ENCODE measurements at regions of chr5 and their contacts with region 1.

Region 1: GRCh38 chr5:143395638-143396352 is 7.7 kb downstream of the NR3C1 start:
- DNase-seq: no peak

Region 2: DNA sequence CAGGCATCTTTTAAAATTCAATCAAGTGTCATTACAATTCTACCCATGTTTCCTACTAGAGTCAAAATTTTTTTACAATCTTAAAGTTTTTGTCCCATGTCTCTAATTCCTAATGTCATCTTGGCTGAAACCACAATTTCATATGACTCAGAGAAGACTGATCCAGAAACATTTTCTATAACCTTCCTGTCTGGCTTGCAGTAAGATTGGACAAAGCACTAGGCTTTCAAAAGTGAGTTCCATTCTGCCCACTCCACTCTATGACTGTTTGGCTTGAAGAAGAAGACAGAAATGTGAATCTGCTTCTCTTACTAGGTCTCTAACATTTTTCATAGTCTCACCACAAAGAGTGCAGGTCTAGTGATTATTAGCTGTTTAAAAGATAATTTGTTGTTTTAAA is 81.1 kb before region 1 on chr5:
- intact Hi-C with region 1: loop called (anchors 10 kb)
- DNase-seq: no peak

Region 3: DNA sequence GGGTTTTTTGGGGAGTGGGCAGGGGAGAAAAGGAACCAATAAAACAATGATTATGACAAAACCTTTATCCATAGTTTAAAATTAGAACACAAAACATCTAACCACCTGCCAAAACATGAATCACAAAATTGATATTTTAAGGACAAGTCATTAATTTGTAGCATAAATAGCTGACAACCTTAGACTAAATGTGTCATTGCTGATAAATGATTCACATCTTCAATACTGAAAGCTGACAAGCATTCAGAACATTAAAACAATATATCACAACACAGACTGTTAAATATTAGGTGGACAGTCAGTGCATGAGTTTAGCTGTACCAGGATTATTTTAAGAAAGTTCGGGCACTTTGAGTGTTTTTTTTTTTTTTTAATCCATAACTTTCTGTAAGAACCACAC is 63.8 kb before region 1 on chr5:
- intact Hi-C with region 1: no loop called
- DNase-seq: no peak

Region 4: GRCh38 chr5:143341807-143342570 is 53.8 kb before region 1 on chr5:
- intact Hi-C with region 1: loop called (anchors 10 kb)
- DNase-seq: no peak

Region 5: DNA sequence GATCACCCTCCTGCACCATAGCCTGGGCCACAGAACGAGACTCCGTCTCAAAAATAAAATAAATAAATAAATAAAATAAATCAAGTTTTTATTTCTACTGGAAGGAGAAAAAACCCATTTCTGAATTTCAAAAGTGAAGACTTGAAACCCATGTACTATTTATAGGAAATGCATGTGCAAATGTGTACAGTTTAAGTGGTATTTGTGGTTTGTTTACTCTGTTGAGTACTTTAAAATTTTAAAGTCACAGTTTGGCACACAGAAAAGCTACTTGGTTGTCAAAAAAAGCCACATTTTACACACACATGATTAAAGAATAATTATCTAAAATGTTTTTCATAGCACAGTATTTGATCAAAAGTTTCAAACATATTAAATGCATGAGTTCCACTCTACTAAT is 35.9 kb before region 1 on chr5:
- intact Hi-C with region 1: loop called (anchors 5 kb)
- DNase-seq: no peak

Measured in cardiac septum (tissue), 1 donor.